ENCODE measurements at regions of chr13 and their contacts with region 1.

Region 1: DNA sequence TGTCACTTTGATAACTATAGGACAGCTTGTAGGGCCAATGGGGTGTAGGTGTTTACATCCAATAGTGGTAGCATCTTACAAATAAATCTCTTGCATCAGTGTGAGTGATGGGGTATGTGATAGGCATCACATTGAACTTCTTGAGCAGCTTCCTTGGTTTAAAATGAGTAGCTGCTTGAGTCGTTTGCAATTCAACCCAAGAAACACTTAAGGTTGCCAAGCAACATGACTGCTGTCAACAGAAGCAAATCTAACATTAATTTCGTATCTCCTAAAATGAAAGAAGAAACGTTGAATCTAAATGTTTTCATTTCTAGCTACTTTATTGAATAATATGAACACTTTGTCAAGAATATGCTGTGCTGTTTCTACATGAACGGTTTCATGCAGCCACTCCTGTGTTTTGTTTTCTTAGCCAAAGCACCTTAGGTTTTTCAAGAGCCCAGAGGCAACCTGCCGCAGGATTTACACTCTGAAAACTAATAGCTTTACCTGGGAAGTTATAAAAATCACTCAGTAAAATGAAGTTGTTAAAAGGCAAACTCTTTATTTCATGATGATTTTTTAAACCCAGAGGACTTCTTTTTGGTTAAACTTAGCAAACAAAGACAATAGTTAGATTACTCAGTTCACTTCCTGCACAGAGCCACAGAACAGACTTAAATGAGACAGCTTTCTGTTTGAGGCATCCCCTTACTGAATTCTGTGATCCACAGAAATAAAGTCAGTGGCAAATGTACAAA is 305.2 kb downstream of the MTUS2 start:
- DNase-seq: no peak
- ATAC-seq: no peak
- H3K4me3 ChIP-seq: no peak overlapping the region
- H3K27ac ChIP-seq: no peak overlapping the region
- H3K4me1 ChIP-seq: peaks cover 0 to 5% of the 10 kb centered on the region in 2 donors
- H3K27me3 ChIP-seq: no peaks in the 10 kb centered on the region

Region 2: GRCh38 chr13:28678809-28679208 is 446.6 kb before region 1 on chr13:
- intact Hi-C with region 1: no loop called
- DNase-seq: no peak
- ATAC-seq: no peak
- H3K4me3 ChIP-seq: no peak overlapping the region
- H3K27ac ChIP-seq: no peak overlapping the region
- H3K4me1 ChIP-seq: no peaks in the 10 kb centered on the region
- H3K27me3 ChIP-seq: no peaks in the 10 kb centered on the region

Region 3: GRCh38 chr13:29039212-29039611 is 86.2 kb before region 1 on chr13:
- intact Hi-C with region 1: loop called in 1 of 2 experiments (anchors 10 kb)
- DNase-seq: no peak
- ATAC-seq: peak; percentile 48
- H3K4me3 ChIP-seq: no peak overlapping the region
- H3K27ac ChIP-seq: no peak overlapping the region
- H3K4me1 ChIP-seq: peaks cover 2 to 5% of the 10 kb centered on the region in 2 donors
- H3K27me3 ChIP-seq: no peaks in the 10 kb centered on the region

Region 4: GRCh38 chr13:29550398-29550988 is 425.1 kb after region 1 on chr13:
- intact Hi-C with region 1: no loop called
- DNase-seq: no peak
- ATAC-seq: no peak
- H3K4me3 ChIP-seq: no peak overlapping the region
- H3K27ac ChIP-seq: no peak overlapping the region
- H3K4me1 ChIP-seq: no peaks in the 10 kb centered on the region
- H3K27me3 ChIP-seq: no peaks in the 10 kb centered on the region

Measured in aorta (tissue), 5 donors.